Tibial artery (tissue), 4 donors: ENCODE measurements at regions of chr1 and their contacts with region 1.

Region 1: DNA sequence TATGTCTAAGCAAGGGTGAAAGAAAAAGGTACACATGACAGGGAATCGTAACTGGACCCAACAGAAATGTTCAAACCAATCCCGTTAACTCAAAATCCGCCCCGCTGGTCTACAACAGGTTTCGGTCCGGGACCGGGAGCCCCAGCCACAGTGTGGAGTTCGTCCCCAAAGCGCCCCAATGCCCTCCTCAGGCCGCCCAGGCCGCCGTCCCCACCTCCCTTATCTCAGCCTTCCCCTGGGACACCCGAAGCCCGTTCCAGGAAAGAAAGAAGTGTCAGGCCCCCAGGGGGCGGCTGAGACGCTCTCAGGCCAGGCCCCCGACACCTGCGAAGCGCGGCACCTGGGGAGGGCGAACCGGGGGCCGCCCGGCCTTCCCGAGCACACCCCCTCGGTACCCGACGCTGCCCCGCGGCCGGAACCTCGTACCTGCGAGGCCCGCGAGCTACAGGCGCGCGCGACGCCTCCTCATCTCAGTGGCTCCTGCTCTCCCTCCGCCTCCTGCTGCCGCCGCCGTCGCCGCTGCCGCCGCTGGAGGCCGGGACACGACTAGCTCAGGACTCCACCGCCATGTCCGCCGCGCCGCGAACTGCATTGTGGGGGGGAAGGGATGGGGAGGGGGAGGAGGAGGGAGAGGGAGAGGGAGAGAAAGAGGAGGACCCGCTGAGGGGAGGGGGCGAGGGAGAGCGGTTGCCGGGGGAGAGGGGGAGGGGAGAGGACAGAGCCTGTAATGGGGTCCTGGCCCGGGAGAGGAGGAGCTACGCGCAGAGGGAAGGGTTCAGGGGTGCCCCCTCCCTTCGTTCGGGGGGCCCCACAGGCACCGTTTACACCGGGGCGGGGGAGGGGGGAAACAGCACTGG is at the start of gene TUT4:
- DNase-seq: peak; percentile 72 to 82
- H3K4me3 ChIP-seq: peak within 1 kb of the TSS; percentile 77 to 82
- H3K27ac ChIP-seq: peak within 1 kb of the TSS; percentile 88 to 89
- H3K4me1 ChIP-seq: peaks cover 0 to 12% (median 5%) of the 10 kb centered on the region in 4 donors
- H3K27me3 ChIP-seq: no peaks in the 10 kb centered on the region
- CTCF ChIP-seq: no peak

Region 2: GRCh38 chr1:52502789-52503188 is 49.9 kb before region 1 on chr1:
- intact Hi-C with region 1: no loop called
- DNase-seq: peak in 1 of 2 donors; percentile 42
- H3K4me3 ChIP-seq: no peak overlapping the region
- H3K27ac ChIP-seq: no peak overlapping the region
- H3K4me1 ChIP-seq: no peaks in the 10 kb centered on the region
- H3K27me3 ChIP-seq: no peaks in the 10 kb centered on the region
- CTCF ChIP-seq: no peak

Region 3: DNA sequence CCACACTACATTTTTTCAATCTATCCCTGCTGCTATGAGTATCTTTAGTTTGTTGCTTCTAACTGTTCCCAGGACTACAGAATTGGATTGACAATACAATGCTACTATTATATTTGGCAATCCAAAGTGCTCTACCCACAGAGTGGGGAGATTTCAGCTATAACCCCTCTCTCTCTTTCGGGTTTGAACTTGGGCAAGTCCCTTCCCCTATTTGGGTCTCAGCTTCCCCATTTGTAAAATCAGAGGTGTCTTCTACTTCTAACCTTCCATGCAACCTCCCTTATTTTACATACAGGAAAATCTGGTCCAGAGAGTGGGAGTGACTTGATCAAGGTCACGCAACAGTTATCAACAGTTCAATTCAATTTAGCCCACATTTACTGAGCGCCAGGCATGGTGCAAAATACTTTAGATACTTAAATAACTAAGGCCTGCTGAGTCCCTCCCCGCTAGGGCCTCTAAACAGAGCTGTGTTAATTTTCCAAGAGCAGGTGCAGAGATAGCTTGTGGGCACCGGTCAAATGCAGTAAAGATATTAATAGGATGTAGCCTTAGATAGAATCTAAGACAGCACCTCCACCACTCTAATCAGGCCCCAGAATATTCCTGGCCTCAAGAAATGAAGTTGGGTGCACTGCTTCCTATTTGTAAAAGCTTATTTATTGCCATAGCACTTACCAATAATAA is 40.0 kb after region 1 on chr1:
- intact Hi-C with region 1: loop called (anchors 1 kb)
- DNase-seq: no peak
- H3K4me3 ChIP-seq: no peak overlapping the region
- H3K27ac ChIP-seq: no peak overlapping the region
- H3K4me1 ChIP-seq: no peaks in the 10 kb centered on the region
- H3K27me3 ChIP-seq: peaks cover 0 to 4% of the 10 kb centered on the region in 2 donors
- CTCF ChIP-seq: no peak